Mammary epithelial cell (primary cell): ENCODE measurements at regions of chr2 and their contacts with region 1.

Region 1: GRCh38 chr2:218659258-218659987 is at the starts of genes BCS1L and ZNF142:
- DNase-seq: peak; percentile 92
- H3K4me3 ChIP-seq: peak within 1 kb of the TSS; percentile 84 to 87 (median 86)
- H3K27ac ChIP-seq: peak within 1 kb of the TSS; percentile 56
- H3K4me1 ChIP-seq: peaks cover 10% of the 10 kb centered on the region
- H3K27me3 ChIP-seq: no peaks in the 10 kb centered on the region
- CTCF ChIP-seq: no peak
- total RNA-seq, gene BCS1L: 28.8 to 53.4 TPM
- total RNA-seq, gene ZNF142: 16.0 to 34.5 TPM

Region 2: GRCh38 chr2:218582076-218582475 is 77.3 kb before region 1 on chr2:
- CTCF ChIA-PET with region 1: no interaction called
- dilution Hi-C with region 1: loop called (anchors 5 kb)
- in situ Hi-C with region 1: no loop called
- intact Hi-C with region 1: no loop called
- DNase-seq: peak; percentile 71
- H3K4me3 ChIP-seq: no peak overlapping the region
- H3K27ac ChIP-seq: no peak overlapping the region
- H3K4me1 ChIP-seq: peaks cover 9% of the 10 kb centered on the region
- H3K27me3 ChIP-seq: no peaks in the 10 kb centered on the region
- CTCF ChIP-seq: no peak

Region 3: DNA sequence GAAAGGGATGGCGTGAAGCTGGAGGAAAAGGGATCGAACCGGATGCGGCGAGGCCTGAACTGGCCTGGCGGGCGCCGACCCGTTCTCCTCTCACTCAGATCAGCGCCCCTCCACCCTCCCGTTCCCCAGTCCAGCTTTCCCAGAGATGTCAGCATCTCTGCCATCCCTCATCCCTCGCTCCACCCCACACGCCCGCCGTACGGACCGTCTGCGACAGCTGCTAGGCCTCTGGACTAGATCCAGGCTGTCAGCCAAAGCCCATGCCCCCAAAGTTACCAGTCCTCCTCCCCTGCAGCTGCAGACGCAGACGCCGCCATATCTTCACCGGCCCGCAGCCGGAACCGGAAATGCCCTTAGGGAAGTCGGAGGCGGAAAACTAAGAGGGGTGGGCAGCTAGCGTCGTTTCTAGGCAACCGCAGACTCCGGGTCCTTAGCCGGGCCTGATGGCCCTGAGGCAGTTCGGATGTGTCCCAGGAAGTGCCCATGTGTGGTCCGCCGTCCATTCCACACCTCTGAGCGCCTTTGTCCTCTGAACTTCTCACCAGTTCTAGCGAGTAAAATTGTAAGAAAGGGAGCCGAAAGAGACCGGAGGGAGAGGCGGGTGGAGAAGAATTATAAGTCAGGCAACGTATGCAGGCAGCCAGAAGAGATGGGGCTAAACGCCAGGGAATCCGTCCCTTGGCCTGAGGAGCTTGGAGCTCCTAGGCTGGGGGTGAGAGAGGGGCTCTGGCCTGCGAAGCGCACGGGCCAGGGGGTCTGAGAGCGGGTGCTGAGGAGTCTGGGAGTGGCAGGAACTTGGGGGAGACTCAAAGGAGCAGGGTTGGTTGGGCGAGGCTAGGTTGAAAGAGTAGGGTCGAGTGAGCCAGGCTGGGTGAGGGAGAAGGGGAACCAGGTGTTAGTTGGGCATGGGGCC is 12.5 kb after region 1 on chr2 and contains the starts of genes RNF25 and STK36:
- CTCF ChIA-PET with region 1: interaction called, 11 read pairs
- dilution Hi-C with region 1: no loop called
- in situ Hi-C with region 1: no loop called
- intact Hi-C with region 1: loop called (anchors 1 kb)
- DNase-seq: peak; percentile 78
- H3K4me3 ChIP-seq: peak within 1 kb of the TSS; percentile 60 to 97 (median 74)
- H3K27ac ChIP-seq: peak within 1 kb of the TSS; percentile 82
- H3K4me1 ChIP-seq: peaks cover 3% of the 10 kb centered on the region
- H3K27me3 ChIP-seq: no peaks in the 10 kb centered on the region
- CTCF ChIP-seq: no peak
- total RNA-seq, gene RNF25: 33.5 to 47.1 TPM
- total RNA-seq, gene STK36: 18.8 to 26.4 TPM

Region 4: GRCh38 chr2:218691234-218691633 is 31.8 kb after region 1 on chr2:
- CTCF ChIA-PET with region 1: interaction called, 4 read pairs
- dilution Hi-C with region 1: no loop called
- in situ Hi-C with region 1: no loop called
- intact Hi-C with region 1: loop called (anchors 1 kb)
- DNase-seq: no peak
- H3K4me3 ChIP-seq: no peak overlapping the region
- H3K27ac ChIP-seq: no peak overlapping the region
- H3K4me1 ChIP-seq: no peaks in the 10 kb centered on the region
- H3K27me3 ChIP-seq: no peaks in the 10 kb centered on the region
- CTCF ChIP-seq: no peak

Region 5: DNA sequence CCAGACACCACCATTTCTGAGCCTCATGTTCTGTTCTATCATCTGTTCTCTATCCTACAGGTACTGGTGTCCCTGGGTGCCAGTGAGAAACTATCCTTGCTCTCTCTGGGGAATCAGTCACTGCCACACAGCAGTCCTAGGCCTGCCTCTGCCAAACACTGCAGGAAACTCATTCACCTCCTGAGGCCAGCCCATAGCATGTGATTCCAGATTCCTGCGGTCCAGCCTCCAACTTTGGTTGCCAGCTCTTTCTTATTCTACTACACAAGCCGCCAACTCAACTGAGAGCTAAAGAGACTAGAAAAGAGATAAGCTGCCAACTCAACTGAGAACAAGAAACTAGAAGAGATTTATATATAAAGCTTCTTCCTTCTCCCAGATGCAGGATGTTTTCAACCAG is 42.4 kb after region 1 on chr2:
- CTCF ChIA-PET with region 1: no interaction called
- dilution Hi-C with region 1: loop called (anchors 5 kb)
- in situ Hi-C with region 1: no loop called
- intact Hi-C with region 1: no loop called
- DNase-seq: peak; percentile 20
- H3K4me3 ChIP-seq: no peak overlapping the region
- H3K27ac ChIP-seq: no peak overlapping the region
- H3K4me1 ChIP-seq: no peaks in the 10 kb centered on the region
- H3K27me3 ChIP-seq: no peaks in the 10 kb centered on the region
- CTCF ChIP-seq: no peak

Region 6: GRCh38 chr2:218727502-218728165 is 68.2 kb after region 1 on chr2:
- CTCF ChIA-PET with region 1: interaction called, 5 read pairs
- dilution Hi-C with region 1: no loop called
- in situ Hi-C with region 1: no loop called
- intact Hi-C with region 1: loop called (anchors 2 kb)
- DNase-seq: peak; percentile 41
- H3K4me3 ChIP-seq: no peak overlapping the region
- H3K27ac ChIP-seq: no peak overlapping the region
- H3K4me1 ChIP-seq: peaks cover 20% of the 10 kb centered on the region
- H3K27me3 ChIP-seq: no peaks in the 10 kb centered on the region
- CTCF ChIP-seq: peak; percentile 50 to 60